ENCODE measurements at regions of chr3 and their contacts with region 1.

Region 1: GRCh38 chr3:57968501-57968900 is 39.7 kb upstream of the FLNB start:
- DNase-seq: no peak
- H3K4me3 Mint-ChIP-seq: no peak overlapping the region
- H3K27ac Mint-ChIP-seq: no peak overlapping the region
- H3K4me1 Mint-ChIP-seq: peaks cover 36% of the 10 kb centered on the region
- H3K27me3 Mint-ChIP-seq: no peaks in the 10 kb centered on the region
- CTCF ChIP-seq: no peak

Region 2: GRCh38 chr3:57892423-57892822 is 76.1 kb before region 1 on chr3:
- CTCF ChIA-PET with region 1: no interaction called
- POLR2A ChIA-PET with region 1: no interaction called
- intact Hi-C with region 1: no loop called
- DNase-seq: peak; percentile 24
- H3K4me3 Mint-ChIP-seq: no peak overlapping the region
- H3K27ac Mint-ChIP-seq: no peak overlapping the region
- H3K4me1 Mint-ChIP-seq: no peaks in the 10 kb centered on the region
- H3K27me3 Mint-ChIP-seq: no peaks in the 10 kb centered on the region
- CTCF ChIP-seq: no peak

Region 3: GRCh38 chr3:57951066-57951882 is 17.2 kb before region 1 on chr3:
- CTCF ChIA-PET with region 1: interaction called, 7 read pairs
- POLR2A ChIA-PET with region 1: interaction called, 12 read pairs
- intact Hi-C with region 1: loop called (anchors 1 kb)
- DNase-seq: peak; percentile 75
- H3K4me3 Mint-ChIP-seq: no peak overlapping the region
- H3K27ac Mint-ChIP-seq: peak overlapping the region; percentile 49
- H3K4me1 Mint-ChIP-seq: peaks cover 19% of the 10 kb centered on the region
- H3K27me3 Mint-ChIP-seq: no peaks in the 10 kb centered on the region
- CTCF ChIP-seq: no peak

Measured in MCF 10A (cell line).